Right cardiac atrium (tissue), 5 donors: ENCODE measurements at regions of chr7 and their contacts with region 1.

Region 1: GRCh38 chr7:112206238-112207044 is at the starts of genes DOCK4 and ZNF277:
- DNase-seq: peak; percentile 99
- ATAC-seq: peak; percentile 98
- H3K4me3 ChIP-seq: peak within 1 kb of the TSS; percentile 89
- H3K27ac ChIP-seq: peak within 1 kb of the TSS; percentile 78
- H3K4me1 ChIP-seq: no peaks in the 10 kb centered on the region
- H3K27me3 ChIP-seq: no peaks in the 10 kb centered on the region
- total RNA-seq, gene DOCK4: 13.5 to 19.9 (median 16.5) TPM
- total RNA-seq, gene ZNF277: 17.1 to 22.4 (median 18.4) TPM

Region 2: GRCh38 chr7:111953611-111954010 is 252.8 kb before region 1 on chr7:
- intact Hi-C with region 1: loop called in 1 of 4 experiments (anchors 10 kb)
- DNase-seq: no peak
- ATAC-seq: peak; percentile 60 to 78
- H3K4me3 ChIP-seq: no peak overlapping the region
- H3K27ac ChIP-seq: no peak overlapping the region
- H3K4me1 ChIP-seq: peaks cover 3% of the 10 kb centered on the region
- H3K27me3 ChIP-seq: no peaks in the 10 kb centered on the region

Region 3: GRCh38 chr7:111987115-111987826 is 219.2 kb before region 1 on chr7:
- intact Hi-C with region 1: loop called in 1 of 4 experiments (anchors 10 kb)
- DNase-seq: no peak
- ATAC-seq: peak; percentile 67 to 91
- H3K4me3 ChIP-seq: no peak overlapping the region
- H3K27ac ChIP-seq: no peak overlapping the region
- H3K4me1 ChIP-seq: no peaks in the 10 kb centered on the region
- H3K27me3 ChIP-seq: no peaks in the 10 kb centered on the region

Region 4: GRCh38 chr7:112383671-112384417 is 177.4 kb after region 1 on chr7:
- intact Hi-C with region 1: loop called in 1 of 4 experiments (anchors 10 kb)
- DNase-seq: no peak
- ATAC-seq: peak; percentile 32 to 33
- H3K4me3 ChIP-seq: no peak overlapping the region
- H3K27ac ChIP-seq: no peak overlapping the region
- H3K4me1 ChIP-seq: no peaks in the 10 kb centered on the region
- H3K27me3 ChIP-seq: no peaks in the 10 kb centered on the region